ENCODE measurements at regions of chr1 and their contacts with region 1.

Region 1: GRCh38 chr1:59947047-59947938 is 20.7 kb upstream of the CYP2J2 start:
- DNase-seq: peak; percentile 39
- ATAC-seq: peak; percentile 96
- H3K4me3 ChIP-seq: no peak overlapping the region
- H3K27ac ChIP-seq: no peak overlapping the region
- H3K4me1 ChIP-seq: no peaks in the 10 kb centered on the region
- H3K27me3 ChIP-seq: peaks cover 7% of the 10 kb centered on the region; the same call in 1 of the 2 replicates
- CTCF ChIP-seq: peak; percentile 79 to 92 (median 88)
- POLR2A ChIP-seq: no peak
- RAD21 ChIP-seq: peak; percentile 90

Region 2: GRCh38 chr1:58515794-58516401 is 1431.4 kb before region 1 on chr1:
- CTCF ChIA-PET with region 1: no interaction called
- POLR2A ChIA-PET with region 1: no interaction called
- RAD21 ChIA-PET with region 1: no interaction called
- intact Hi-C with region 1: loop called (anchors 10 kb)
- DNase-seq: peak; percentile 69
- ATAC-seq: peak; percentile 76
- H3K4me3 ChIP-seq: no peak overlapping the region
- H3K27ac ChIP-seq: no peak overlapping the region
- H3K4me1 ChIP-seq: no peaks in the 10 kb centered on the region
- H3K27me3 ChIP-seq: no peaks in the 10 kb centered on the region
- CTCF ChIP-seq: peak; percentile 49 to 77 (median 71)
- POLR2A ChIP-seq: no peak
- RAD21 ChIP-seq: peak; percentile 92

Region 3: DNA sequence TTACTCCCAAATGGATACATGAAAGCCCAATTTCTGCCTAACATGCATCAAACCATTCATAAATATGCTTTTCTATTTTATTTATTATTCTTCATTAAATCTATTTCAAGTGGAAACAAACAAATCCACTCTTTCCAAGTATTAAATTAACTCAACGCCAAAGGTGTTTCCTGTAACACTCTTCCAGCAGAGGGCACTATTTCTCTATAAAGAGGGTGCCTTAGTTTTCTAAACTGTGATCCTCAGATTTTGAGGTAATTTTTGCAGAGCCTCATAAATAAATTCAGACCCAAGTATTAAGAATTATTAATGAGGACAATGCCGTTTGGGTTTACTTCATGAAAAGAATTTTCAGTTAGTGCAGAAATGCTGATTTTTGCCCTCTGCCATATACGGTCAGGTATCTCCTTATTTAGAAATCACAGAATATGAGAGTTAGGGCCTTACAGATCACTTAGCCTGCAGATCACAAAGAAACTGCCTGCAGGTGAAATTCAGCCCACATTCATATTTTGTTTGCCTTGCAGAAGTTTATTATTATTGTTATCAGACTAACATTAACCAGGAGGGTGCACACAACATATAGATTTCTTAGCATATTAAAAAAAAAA is 1207.3 kb before region 1 on chr1:
- CTCF ChIA-PET with region 1: no interaction called
- POLR2A ChIA-PET with region 1: no interaction called
- RAD21 ChIA-PET with region 1: no interaction called
- intact Hi-C with region 1: loop called (anchors 5 kb)
- DNase-seq: peak; percentile 39
- ATAC-seq: peak; percentile 75; the same call in 1 of the 2 replicates
- H3K4me3 ChIP-seq: no peak overlapping the region
- H3K27ac ChIP-seq: no peak overlapping the region
- H3K4me1 ChIP-seq: no peaks in the 10 kb centered on the region; a peak in 1 of 4 replicates
- H3K27me3 ChIP-seq: no peaks in the 10 kb centered on the region
- CTCF ChIP-seq: peak; percentile 59 to 87 (median 83)
- POLR2A ChIP-seq: no peak
- RAD21 ChIP-seq: peak; percentile 96

Region 4: DNA sequence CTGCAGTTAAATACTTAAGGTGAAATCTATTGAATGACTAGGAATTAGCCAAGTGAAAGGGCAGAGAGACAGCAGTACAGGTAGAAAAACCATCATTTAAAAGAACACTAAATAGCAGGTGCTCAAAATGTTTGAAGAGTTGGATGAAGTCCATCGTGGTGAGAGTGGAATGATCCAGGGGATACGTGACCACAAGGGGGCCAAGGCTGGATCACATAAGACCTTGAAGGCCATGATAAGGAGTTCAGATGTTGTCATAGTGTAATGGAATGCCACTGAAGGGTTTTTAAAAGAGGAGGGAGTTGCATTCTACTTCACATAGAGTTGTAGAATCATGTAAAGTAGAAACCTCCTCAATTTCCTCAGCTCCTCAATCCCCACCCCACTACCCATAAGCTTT is 167.3 kb before region 1 on chr1:
- CTCF ChIA-PET with region 1: interaction called, 4 read pairs
- POLR2A ChIA-PET with region 1: no interaction called
- RAD21 ChIA-PET with region 1: interaction called in 1 of 2 experiments, 5 read pairs
- intact Hi-C with region 1: loop called (anchors 5 kb)
- DNase-seq: no peak
- ATAC-seq: peak; percentile 57; the same call in 1 of the 2 replicates
- H3K4me3 ChIP-seq: no peak overlapping the region
- H3K27ac ChIP-seq: no peak overlapping the region
- H3K4me1 ChIP-seq: no peaks in the 10 kb centered on the region
- H3K27me3 ChIP-seq: no peaks in the 10 kb centered on the region
- CTCF ChIP-seq: peak in 2 of 3 experiments; percentile 49 to 52; a peak in 4 of 6 replicates
- POLR2A ChIP-seq: no peak
- RAD21 ChIP-seq: no peak; the same call in 1 of the 2 replicates

Region 5: DNA sequence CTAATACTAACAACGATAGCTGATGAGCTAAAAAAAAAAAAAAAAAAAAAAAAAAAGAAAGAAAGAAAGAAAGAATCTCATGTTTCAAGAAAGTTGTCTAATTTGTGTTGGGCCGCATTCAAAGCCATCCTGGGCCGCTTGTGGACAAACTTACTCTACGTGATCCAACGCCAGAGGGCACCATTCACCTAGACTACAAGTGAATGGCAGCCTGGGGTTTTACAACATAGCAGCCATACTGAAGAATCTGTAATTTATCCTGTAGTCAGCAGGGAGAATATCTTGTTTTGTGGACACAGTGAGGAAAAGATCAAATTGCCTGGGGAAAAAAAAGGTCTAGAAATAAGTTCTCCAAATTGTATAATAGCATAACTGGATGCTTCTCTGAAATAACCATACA is 67.7 kb before region 1 on chr1:
- CTCF ChIA-PET with region 1: interaction called, 78 read pairs
- POLR2A ChIA-PET with region 1: no interaction called
- RAD21 ChIA-PET with region 1: interaction called, 6 read pairs
- intact Hi-C with region 1: loop called (anchors 1 kb)
- DNase-seq: peak; percentile 38
- ATAC-seq: peak; percentile 86
- H3K4me3 ChIP-seq: no peak overlapping the region
- H3K27ac ChIP-seq: no peak overlapping the region
- H3K4me1 ChIP-seq: no peaks in the 10 kb centered on the region
- H3K27me3 ChIP-seq: no peaks in the 10 kb centered on the region
- CTCF ChIP-seq: peak; percentile 46 to 62 (median 53); a peak in 5 of 6 replicates
- POLR2A ChIP-seq: no peak
- RAD21 ChIP-seq: peak; percentile 66

Region 6: GRCh38 chr1:59903141-59903754 is 44.0 kb before region 1 on chr1:
- CTCF ChIA-PET with region 1: interaction called, 18 read pairs
- POLR2A ChIA-PET with region 1: no interaction called
- RAD21 ChIA-PET with region 1: interaction called, 3 read pairs
- intact Hi-C with region 1: loop called (anchors 5 kb)
- DNase-seq: peak; percentile 27
- ATAC-seq: peak; percentile 92
- H3K4me3 ChIP-seq: no peak overlapping the region
- H3K27ac ChIP-seq: no peak overlapping the region
- H3K4me1 ChIP-seq: no peaks in the 10 kb centered on the region
- H3K27me3 ChIP-seq: no peaks in the 10 kb centered on the region
- CTCF ChIP-seq: peak; percentile 46 to 61 (median 60); a peak in 5 of 6 replicates
- POLR2A ChIP-seq: no peak
- RAD21 ChIP-seq: peak; percentile 59

Region 7: GRCh38 chr1:59926381-59927123 is 20.7 kb before region 1 on chr1 and contains the start of gene CYP2J2:
- CTCF ChIA-PET with region 1: interaction called, 10 read pairs
- POLR2A ChIA-PET with region 1: no interaction called
- RAD21 ChIA-PET with region 1: no interaction called
- intact Hi-C with region 1: no loop called
- DNase-seq: peak; percentile 10
- ATAC-seq: peak; percentile 98
- H3K4me3 ChIP-seq: peak within 1 kb of the TSS; percentile 30 to 50
- H3K27ac ChIP-seq: no peak within 1 kb of the TSS
- H3K4me1 ChIP-seq: peaks cover 0 to 7% of the 10 kb centered on the region in 2 experiments; a peak in 1 of 4 replicates
- H3K27me3 ChIP-seq: no peaks in the 10 kb centered on the region; the same call in 1 of the 2 replicates
- CTCF ChIP-seq: no peak
- POLR2A ChIP-seq: no peak
- RAD21 ChIP-seq: no peak
- total RNA-seq, gene CYP2J2: 1.1 TPM